ENCODE measurements at regions of chr2 and their contacts with region 1.

Region 1: GRCh38 chr2:196205881-196206435 is 34.6 kb upstream of the STK17B start:
- DNase-seq: no peak
- ATAC-seq: no peak
- H3K4me3 ChIP-seq: no peak overlapping the region
- H3K27ac ChIP-seq: no peak overlapping the region
- H3K4me1 ChIP-seq: peaks cover 22% of the 10 kb centered on the region
- H3K27me3 ChIP-seq: no peaks in the 10 kb centered on the region
- CTCF ChIP-seq: no peak
- EP300 ChIP-seq: no peak
- POLR2A ChIP-seq: no peak
- RAD21 ChIP-seq: no peak

Region 2: GRCh38 chr2:196187898-196188458 is 18.0 kb before region 1 on chr2:
- CTCF ChIA-PET with region 1: interaction called, 13 read pairs
- POLR2A ChIA-PET with region 1: interaction called, 22 read pairs
- RAD21 ChIA-PET with region 1: interaction called, 39 read pairs
- SMC1A ChIA-PET with region 1: interaction called, 104 read pairs
- in situ Hi-C with region 1: no loop called
- intact Hi-C with region 1: no loop called
- DNase-seq: no peak
- ATAC-seq: peak; percentile 29; the same call in 2 of the 3 replicates
- H3K4me3 ChIP-seq: no peak overlapping the region
- H3K27ac ChIP-seq: no peak overlapping the region
- H3K4me1 ChIP-seq: peaks cover 7% of the 10 kb centered on the region
- H3K27me3 ChIP-seq: no peaks in the 10 kb centered on the region
- CTCF ChIP-seq: no peak
- EP300 ChIP-seq: 0 out of 4 replicates have a peak, but pooled peaks of 1 of the 2 experiments have one; percentile 14
- POLR2A ChIP-seq: no peak
- RAD21 ChIP-seq: no peak

Region 3: DNA sequence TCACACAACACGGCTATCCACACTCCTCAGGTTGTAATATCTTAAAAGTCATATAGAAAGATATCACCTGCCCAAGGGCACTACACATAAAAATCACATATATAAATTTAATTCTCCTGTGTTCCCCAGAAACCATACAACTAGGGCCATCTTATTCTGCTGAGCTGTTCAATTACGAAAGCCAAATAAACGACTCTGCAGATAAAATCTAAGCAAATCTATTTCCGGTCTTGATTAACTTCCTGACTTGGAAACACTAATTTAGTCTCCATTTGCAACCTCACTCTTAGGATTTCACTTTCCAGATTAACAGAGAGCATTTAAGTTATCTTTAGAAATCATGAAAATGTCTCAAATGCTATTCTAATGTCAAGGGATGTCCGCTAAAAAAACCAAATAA is 10.7 kb before region 1 on chr2:
- CTCF ChIA-PET with region 1: interaction called, 13 read pairs
- POLR2A ChIA-PET with region 1: interaction called, 17 read pairs
- RAD21 ChIA-PET with region 1: interaction called, 13 read pairs
- SMC1A ChIA-PET with region 1: interaction called, 58 read pairs
- in situ Hi-C with region 1: no loop called
- intact Hi-C with region 1: no loop called
- DNase-seq: no peak
- ATAC-seq: no peak
- H3K4me3 ChIP-seq: no peak overlapping the region
- H3K27ac ChIP-seq: no peak overlapping the region
- H3K4me1 ChIP-seq: no peaks in the 10 kb centered on the region
- H3K27me3 ChIP-seq: no peaks in the 10 kb centered on the region
- CTCF ChIP-seq: no peak
- EP300 ChIP-seq: no peak
- POLR2A ChIP-seq: no peak
- RAD21 ChIP-seq: no peak

Region 4: DNA sequence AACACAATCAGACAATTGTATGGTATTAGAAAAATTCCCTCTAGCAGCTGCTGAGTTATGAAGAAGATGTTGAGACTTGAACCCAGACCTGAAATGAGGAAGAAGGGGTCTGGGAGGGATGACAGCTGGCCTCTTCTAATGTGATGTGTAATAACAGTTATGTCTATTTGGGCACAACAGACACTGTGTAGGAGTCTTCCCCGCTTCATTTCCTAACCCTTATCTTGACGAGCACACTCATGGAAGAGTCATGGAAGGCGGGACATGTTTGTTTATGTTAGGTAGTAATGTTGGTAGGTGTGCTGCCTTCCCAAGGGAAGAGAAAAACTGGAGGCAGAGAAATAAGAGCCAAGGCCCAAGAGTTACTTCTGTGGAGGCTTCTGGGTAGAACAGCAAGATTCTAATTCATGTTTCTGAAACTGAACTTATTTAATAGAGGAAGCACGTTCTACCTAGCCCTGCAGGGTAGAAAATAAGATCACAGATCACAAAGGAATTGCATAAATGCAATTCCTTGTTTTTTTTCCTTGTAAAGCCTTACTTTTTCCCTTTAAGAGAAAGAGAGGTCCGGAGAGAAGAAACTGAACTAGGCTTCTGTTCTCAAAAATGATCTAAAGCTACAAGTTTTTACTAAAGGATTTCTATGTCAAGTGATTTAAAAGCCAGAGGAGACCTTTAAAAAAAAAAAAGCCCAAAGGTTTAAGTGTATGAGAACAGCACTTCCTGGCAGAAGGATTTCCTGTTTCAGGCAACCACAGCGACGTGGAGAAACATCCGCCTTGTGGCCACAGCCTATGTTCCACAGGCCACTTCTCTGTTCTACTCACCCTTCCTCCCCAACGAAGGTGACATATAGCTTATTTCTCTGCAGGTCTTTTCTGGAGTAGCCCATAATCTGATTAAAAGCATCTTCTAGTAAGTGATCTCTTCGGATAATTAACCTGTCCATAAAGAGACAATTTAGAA is 33.9 kb after region 1 on chr2:
- CTCF ChIA-PET with region 1: interaction called, 8 read pairs
- POLR2A ChIA-PET with region 1: interaction called, 7 read pairs
- RAD21 ChIA-PET with region 1: interaction called, 42 read pairs
- SMC1A ChIA-PET with region 1: interaction called, 52 read pairs
- in situ Hi-C with region 1: no loop called
- intact Hi-C with region 1: loop called (anchors 2 kb)
- DNase-seq: peak; percentile 86
- ATAC-seq: peak; percentile 79
- H3K4me3 ChIP-seq: no peak overlapping the region
- H3K27ac ChIP-seq: peak overlapping the region; percentile 75
- H3K4me1 ChIP-seq: peaks cover 36% of the 10 kb centered on the region
- H3K27me3 ChIP-seq: no peaks in the 10 kb centered on the region
- CTCF ChIP-seq: 0 out of 6 replicates have a peak, but pooled peaks of 1 of the 3 experiments have one; percentile 3
- EP300 ChIP-seq: peak; percentile 74 to 85
- POLR2A ChIP-seq: no peak
- RAD21 ChIP-seq: 0 out of 2 replicates have a peak, but pooled peaks have one; percentile 19